ENCODE measurements at regions of chr2 and their contacts with region 1.

Region 1: GRCh38 chr2:23505218-23505983 is 120.4 kb downstream of the KLHL29 start:
- DNase-seq: no peak
- H3K4me3 ChIP-seq: no peak overlapping the region
- H3K27ac ChIP-seq: no peak overlapping the region
- H3K4me1 ChIP-seq: peaks cover 0 to 63% of the 10 kb centered on the region in 2 experiments; a peak in 2 of 4 replicates
- H3K27me3 ChIP-seq: no peaks in the 10 kb centered on the region
- CTCF ChIP-seq: peak; percentile 18; the same call in 1 of the 2 replicates
- EP300 ChIP-seq: no peak
- RAD21 ChIP-seq: no peak

Region 2: GRCh38 chr2:23492921-23493320 is 12.5 kb before region 1 on chr2:
- CTCF ChIA-PET with region 1: interaction called, 20 read pairs
- POLR2A ChIA-PET with region 1: no interaction called
- DNase-seq: no peak
- H3K4me3 ChIP-seq: no peak overlapping the region
- H3K27ac ChIP-seq: peak overlapping the region in 1 of 2 experiments; percentile 26; a peak in 1 of 4 replicates
- H3K4me1 ChIP-seq: peaks cover 18 to 33% of the 10 kb centered on the region in 2 experiments; a peak in 3 of 4 replicates
- H3K27me3 ChIP-seq: no peaks in the 10 kb centered on the region
- CTCF ChIP-seq: no peak
- EP300 ChIP-seq: no peak
- RAD21 ChIP-seq: no peak

Measured in SK-N-SH (cell line).